IMR-90 (cell line): ENCODE measurements at regions of chr6 and their contacts with region 1.

Region 1: DNA sequence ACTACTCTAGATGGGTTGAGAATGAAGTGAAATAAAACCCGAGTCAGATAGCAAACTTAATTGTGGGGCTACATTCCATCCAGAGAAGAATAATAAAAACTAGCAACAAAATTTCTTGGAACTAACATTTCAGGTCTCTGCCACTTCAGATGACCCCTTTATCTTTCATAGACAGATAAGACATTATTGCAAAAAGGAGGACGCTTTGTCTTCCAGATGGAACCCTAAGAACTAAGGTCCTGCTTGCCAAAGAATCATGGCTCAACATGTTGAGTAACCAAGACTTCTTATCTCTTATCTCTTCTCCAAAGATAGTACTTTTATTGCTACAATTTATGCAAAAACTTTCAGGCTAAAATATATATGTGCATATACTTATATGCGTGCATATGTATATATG is 221.1 kb upstream of the PREP start:
- DNase-seq: no peak
- ATAC-seq: no peak
- H3K4me3 ChIP-seq: no peak overlapping the region
- H3K27ac ChIP-seq: no peak overlapping the region
- H3K4me1 ChIP-seq: peaks cover 2% of the 10 kb centered on the region; the same call in 1 of the 2 replicates
- H3K27me3 ChIP-seq: no peaks in the 10 kb centered on the region
- CTCF ChIP-seq: no peak
- POLR2A ChIP-seq: no peak
- RAD21 ChIP-seq: no peak

Region 2: DNA sequence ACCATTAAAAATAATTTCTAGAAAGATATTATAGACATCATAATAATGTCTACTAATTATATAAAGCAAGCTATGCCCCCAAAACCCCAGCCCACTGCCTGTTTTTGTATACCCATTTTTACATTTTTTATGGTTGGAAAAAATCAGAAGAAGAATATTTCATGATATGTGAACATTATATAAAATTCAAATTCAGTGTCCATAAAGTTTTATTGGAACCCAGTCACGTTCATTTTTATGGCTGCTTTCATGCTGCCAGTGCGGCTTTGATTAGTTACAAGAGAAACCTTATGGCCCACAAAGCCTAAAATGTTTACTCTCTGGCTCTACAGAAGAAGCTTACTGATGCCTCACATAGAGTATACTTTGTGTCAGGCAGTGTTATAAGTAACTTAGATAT is 485.0 kb before region 1 on chr6:
- CTCF ChIA-PET with region 1: no interaction called
- POLR2A ChIA-PET with region 1: no interaction called
- dilution Hi-C with region 1: no loop called
- in situ Hi-C with region 1: no loop called
- intact Hi-C with region 1: no loop called
- DNase-seq: no peak
- ATAC-seq: no peak
- H3K4me3 ChIP-seq: no peak overlapping the region
- H3K27ac ChIP-seq: no peak overlapping the region
- H3K4me1 ChIP-seq: no peaks in the 10 kb centered on the region
- H3K27me3 ChIP-seq: no peaks in the 10 kb centered on the region
- CTCF ChIP-seq: no peak
- POLR2A ChIP-seq: no peak
- RAD21 ChIP-seq: no peak

Region 3: DNA sequence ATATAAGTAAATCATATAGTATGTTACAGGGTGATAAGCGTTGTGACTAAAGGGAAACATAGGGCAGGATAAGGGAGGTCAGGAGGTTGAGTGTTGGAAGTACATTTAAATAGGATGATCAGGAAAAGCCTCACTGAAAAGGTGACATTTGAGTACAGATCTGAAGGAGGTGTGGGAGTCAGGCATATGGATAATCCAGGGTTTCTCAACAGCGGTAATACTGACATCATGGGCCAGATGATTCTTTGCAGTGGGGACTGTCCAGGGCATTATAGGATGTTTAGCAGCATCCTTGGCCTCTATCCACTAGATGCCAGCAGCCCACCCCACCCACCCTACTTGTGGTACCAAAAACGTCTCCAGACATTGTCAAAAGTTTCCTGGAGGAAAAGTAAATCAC is 71.4 kb after region 1 on chr6:
- CTCF ChIA-PET with region 1: no interaction called
- POLR2A ChIA-PET with region 1: interaction called, 16 read pairs
- dilution Hi-C with region 1: no loop called
- in situ Hi-C with region 1: no loop called
- intact Hi-C with region 1: no loop called
- DNase-seq: no peak
- ATAC-seq: no peak
- H3K4me3 ChIP-seq: no peak overlapping the region
- H3K27ac ChIP-seq: no peak overlapping the region
- H3K4me1 ChIP-seq: no peaks in the 10 kb centered on the region
- H3K27me3 ChIP-seq: no peaks in the 10 kb centered on the region
- CTCF ChIP-seq: no peak
- POLR2A ChIP-seq: no peak
- RAD21 ChIP-seq: no peak

Region 4: GRCh38 chr6:105713474-105714118 is 89.6 kb after region 1 on chr6:
- CTCF ChIA-PET with region 1: no interaction called
- POLR2A ChIA-PET with region 1: no interaction called
- dilution Hi-C with region 1: no loop called
- in situ Hi-C with region 1: no loop called
- intact Hi-C with region 1: no loop called
- DNase-seq: peak; percentile 10
- ATAC-seq: no peak
- H3K4me3 ChIP-seq: no peak overlapping the region
- H3K27ac ChIP-seq: no peak overlapping the region
- H3K4me1 ChIP-seq: no peaks in the 10 kb centered on the region
- H3K27me3 ChIP-seq: no peaks in the 10 kb centered on the region
- CTCF ChIP-seq: no peak
- POLR2A ChIP-seq: no peak
- RAD21 ChIP-seq: no peak